Cardiac septum (tissue), 1 donor: ENCODE measurements at regions of chr15 and their contacts with region 1.

Region 1: DNA sequence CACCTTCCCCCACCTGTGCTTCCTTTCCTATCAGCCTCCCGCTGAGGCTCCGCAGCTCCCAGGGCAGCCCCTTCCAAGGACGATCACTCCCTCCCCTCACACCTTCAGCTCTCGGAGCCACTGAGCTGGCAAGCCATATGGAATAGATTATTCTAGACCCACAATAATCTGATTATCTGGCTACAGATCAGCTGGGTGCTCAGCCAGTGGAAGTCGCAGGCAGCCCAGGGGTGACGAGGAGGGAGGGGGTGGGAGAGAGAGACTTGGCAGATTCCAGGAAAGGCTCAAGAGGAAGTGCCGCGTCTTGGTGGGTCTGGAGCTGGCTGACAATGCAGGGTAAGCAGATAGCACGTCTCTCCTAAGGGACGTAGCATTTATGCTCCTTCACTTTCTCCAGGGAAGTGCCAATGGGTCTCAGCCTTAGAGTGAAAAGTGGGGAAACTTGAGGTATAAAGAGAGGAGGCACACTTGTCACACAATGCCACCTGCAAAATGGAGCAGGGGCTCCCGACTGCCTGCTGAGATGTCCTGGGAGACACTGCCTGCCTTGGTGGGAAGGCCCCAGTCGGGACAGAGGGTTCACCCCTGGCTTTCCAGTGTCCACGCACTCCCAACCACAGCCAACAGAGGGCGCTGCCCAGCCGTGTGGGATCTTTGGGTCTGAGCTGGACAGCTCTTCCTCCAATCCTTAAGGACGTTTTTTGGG is 9.4 kb upstream of the MESP1 start:
- DNase-seq: peak; percentile 92

Region 2: DNA sequence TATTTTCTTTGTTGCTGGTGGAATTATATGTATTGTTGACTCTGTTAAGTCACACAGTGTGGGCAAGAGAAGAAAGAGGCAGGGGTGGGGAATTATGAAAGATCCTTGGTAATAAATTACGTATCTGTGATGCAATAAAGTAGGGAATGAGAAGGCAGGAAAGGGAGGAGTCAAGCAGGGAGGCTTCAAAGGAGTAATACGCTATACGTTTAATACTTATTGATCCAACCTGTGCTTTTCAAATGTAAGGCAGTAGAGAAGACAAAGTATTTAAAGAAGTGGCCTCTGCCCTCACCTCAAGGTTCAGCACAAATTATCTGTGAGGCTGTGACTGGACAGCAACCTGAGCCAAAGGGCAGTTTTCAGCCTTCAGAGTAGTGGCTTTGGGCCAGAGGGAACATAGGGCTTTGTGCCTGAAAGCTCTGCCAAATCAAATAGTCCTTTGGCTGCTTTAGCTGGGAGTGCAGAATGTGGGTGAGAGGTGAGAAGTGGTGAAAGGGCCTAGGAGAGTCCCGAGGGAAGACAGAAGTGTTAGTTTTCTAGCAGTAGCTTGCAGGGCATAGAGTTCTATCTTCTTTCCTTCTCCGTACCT is 80.1 kb before region 1 on chr15:
- intact Hi-C with region 1: no loop called
- DNase-seq: no peak

Region 3: GRCh38 chr15:89836255-89837133 is 76.0 kb after region 1 on chr15:
- intact Hi-C with region 1: loop called (anchors 10 kb)
- DNase-seq: no peak

Region 4: GRCh38 chr15:89874926-89875564 is 114.6 kb after region 1 on chr15:
- intact Hi-C with region 1: loop called (anchors 2 kb)
- DNase-seq: peak; percentile 90

Region 5: DNA sequence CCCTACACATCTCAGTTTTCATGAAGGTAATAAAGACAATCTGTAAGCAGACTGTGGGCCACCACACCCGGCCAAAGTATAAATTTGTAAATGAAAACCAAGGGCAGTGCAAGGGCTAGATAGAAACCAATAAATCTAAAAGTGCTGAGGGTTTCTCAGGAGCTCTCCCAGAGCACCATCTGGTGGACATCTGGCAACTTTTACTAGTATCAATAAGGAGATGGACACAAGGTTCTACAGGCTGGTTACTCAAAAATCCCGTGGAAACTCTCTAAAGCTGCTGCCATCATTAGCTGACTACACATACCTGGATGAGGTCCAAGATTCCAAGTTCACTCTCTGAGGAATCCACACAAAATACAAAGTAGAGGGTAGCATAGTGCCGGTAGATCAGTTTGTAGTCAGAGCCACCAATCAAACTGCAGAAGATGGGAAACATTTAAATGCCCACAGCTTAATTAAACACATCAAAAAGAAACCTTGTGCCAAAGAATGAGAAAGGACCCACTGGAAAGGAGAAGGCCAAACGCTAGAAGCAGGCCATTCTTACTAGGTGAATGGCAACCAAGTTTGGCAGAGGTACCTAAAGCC is 127.9 kb after region 1 on chr15:
- intact Hi-C with region 1: no loop called
- DNase-seq: no peak

Region 6: DNA sequence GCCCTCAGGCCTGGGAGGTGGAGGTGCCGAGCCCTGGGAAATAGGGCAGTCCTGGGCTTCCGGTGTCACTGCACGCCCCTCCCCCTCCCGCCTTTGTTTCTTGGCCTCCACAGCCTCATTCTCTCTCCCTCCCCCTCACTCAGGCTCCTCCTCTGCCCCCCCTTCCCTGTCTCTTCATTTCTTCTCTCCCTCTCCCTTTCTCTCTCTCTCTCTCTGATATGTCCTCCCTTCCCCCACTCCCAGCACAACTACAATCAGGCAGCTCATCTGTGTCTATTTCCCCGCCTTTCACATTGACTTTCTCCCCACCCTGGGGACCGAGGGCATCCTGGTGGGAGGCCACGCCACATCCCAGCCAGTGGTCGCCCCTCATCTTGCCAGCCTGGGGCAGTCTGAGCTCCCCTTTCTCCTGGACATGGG is 301.6 kb after region 1 on chr15:
- intact Hi-C with region 1: loop called (anchors 10 kb)
- DNase-seq: no peak